Body of pancreas (tissue), 4 donors: ENCODE measurements at regions of chr1 and their contacts with region 1.

Region 1: GRCh38 chr1:227214207-227214606 is 104.1 kb downstream of the CDC42BPA start:
- DNase-seq: no peak
- ATAC-seq: no peak
- H3K4me3 ChIP-seq: no peak overlapping the region
- H3K27ac ChIP-seq: no peak overlapping the region
- H3K4me1 ChIP-seq: peaks cover 10% of the 10 kb centered on the region
- H3K27me3 ChIP-seq: no peaks in the 10 kb centered on the region
- CTCF ChIP-seq: no peak
- POLR2A ChIP-seq: no peak

Region 2: DNA sequence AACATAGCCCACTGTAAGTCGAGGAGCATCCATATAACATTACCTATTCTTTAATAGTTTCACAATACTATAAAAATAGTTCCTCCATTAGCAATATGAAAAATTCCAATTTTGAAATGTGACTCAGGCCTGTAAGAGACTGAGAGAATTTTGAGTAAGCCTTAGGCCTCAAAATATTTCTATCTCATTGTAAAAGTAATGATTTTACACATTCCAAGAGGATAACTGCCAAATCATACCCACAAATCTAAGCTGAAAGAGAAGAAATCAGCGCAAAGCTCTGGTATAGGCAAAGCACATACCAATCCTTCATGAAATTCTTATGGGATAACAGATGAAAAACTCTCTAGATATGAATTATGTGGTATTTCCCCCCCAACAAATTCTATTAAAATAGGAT is 40.0 kb before region 1 on chr1:
- intact Hi-C with region 1: no loop called
- DNase-seq: no peak
- ATAC-seq: no peak
- H3K4me3 ChIP-seq: no peak overlapping the region
- H3K27ac ChIP-seq: no peak overlapping the region
- H3K4me1 ChIP-seq: peaks cover 10% of the 10 kb centered on the region
- H3K27me3 ChIP-seq: no peaks in the 10 kb centered on the region
- CTCF ChIP-seq: no peak
- POLR2A ChIP-seq: no peak

Region 3: DNA sequence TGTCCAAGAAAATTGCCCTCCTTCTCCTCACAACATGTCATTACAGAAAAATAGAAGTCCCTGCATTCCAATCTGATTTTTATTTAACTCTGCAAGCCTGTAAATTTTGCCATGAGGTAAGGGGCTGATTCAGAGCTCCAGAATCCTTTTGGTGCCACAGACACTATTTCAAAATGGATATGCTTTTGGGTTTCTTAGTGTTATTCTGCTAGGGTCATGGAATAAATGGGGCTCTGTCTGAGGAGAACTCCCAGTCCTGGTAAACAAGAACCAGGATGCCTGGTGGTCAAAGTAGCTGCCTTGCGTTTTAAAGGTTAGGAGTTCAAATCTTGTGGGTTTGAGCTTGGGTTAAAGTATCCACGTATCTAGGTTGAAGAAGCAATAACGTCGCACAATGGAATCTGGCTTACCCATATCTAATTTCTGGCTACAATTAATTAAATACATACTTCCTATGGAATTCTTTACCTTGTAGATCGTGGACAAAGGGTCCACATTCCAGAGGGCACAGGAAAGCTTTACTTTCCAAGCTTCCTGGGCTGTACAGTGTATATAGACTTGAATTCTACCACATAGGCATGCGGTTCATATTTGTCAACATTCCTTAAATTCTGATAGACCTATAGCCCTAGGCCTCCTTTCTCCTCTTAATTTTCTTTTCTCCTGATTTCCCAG is 202.1 kb after region 1 on chr1:
- intact Hi-C with region 1: loop called (anchors 10 kb)
- DNase-seq: no peak
- ATAC-seq: no peak
- H3K4me3 ChIP-seq: no peak overlapping the region
- H3K27ac ChIP-seq: no peak overlapping the region
- H3K4me1 ChIP-seq: no peaks in the 10 kb centered on the region
- H3K27me3 ChIP-seq: no peaks in the 10 kb centered on the region
- CTCF ChIP-seq: no peak
- POLR2A ChIP-seq: no peak